ENCODE measurements at regions of chr14 and their contacts with region 1.

Region 1: DNA sequence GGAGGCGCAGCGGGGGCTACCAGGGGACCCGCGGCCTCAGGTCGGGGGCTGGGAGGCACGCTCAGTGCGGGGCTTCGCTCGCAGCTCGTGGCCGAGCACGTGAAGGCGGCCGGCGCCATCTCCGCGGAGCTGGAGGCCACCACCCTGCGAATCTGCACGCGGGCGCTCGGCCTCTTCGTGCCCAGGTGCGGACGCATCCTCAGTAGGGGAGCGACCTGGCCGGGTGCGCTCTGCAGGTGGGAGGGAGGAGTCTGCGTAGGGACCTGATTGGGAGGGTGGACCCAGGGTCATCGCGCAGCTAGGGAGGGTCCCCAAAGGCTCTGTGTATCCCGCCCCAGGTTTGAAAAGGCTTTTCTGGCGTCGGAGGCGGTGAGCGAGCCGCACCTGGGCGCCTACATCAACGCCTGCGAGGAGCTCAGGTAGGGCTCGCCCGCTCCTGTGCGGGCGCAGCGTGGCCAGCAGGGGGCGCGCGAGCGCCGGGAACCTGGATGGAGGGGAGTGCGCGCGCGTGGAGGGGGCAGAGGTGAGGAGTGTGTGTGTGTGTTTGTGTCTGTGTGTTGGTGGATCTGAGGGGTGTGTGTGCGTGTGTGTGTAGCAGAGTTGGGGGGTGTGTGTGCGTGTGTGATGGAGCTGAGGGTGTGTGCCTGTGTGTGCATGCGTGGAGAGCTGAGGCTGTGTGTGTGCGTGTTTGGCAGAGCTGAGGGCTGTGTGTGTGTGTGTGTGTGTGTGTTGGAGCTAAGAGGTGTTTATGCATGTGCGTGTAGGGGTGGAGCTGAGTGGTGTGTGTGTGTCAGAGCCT is 10.3 kb downstream of the EXOC3L4 start:
- DNase-seq: no peak
- H3K4me3 ChIP-seq: peak overlapping the region in 1 of 2 donors; percentile 11
- H3K27ac ChIP-seq: no peak overlapping the region
- H3K4me1 ChIP-seq: peaks cover 3 to 13% of the 10 kb centered on the region in 2 donors
- H3K27me3 ChIP-seq: peaks cover 28% of the 10 kb centered on the region
- CTCF ChIP-seq: peak; percentile 89 to 99 (median 99)

Region 2: GRCh38 chr14:102694530-102695166 is 410.2 kb before region 1 on chr14:
- intact Hi-C with region 1: loop called (anchors 10 kb)
- DNase-seq: peak in 1 of 2 donors; percentile 74
- H3K4me3 ChIP-seq: no peak overlapping the region
- H3K27ac ChIP-seq: no peak overlapping the region
- H3K4me1 ChIP-seq: no peaks in the 10 kb centered on the region
- H3K27me3 ChIP-seq: no peaks in the 10 kb centered on the region
- CTCF ChIP-seq: peak; percentile 57 to 71 (median 60)

Region 3: GRCh38 chr14:103185051-103185992 is 80.5 kb after region 1 on chr14:
- intact Hi-C with region 1: loop called (anchors 2 kb)
- DNase-seq: no peak
- H3K4me3 ChIP-seq: no peak overlapping the region
- H3K27ac ChIP-seq: no peak overlapping the region
- H3K4me1 ChIP-seq: peaks cover 0 to 3% of the 10 kb centered on the region in 2 donors
- H3K27me3 ChIP-seq: peaks cover 5% of the 10 kb centered on the region
- CTCF ChIP-seq: peak; percentile 40 to 52 (median 42)

Region 4: DNA sequence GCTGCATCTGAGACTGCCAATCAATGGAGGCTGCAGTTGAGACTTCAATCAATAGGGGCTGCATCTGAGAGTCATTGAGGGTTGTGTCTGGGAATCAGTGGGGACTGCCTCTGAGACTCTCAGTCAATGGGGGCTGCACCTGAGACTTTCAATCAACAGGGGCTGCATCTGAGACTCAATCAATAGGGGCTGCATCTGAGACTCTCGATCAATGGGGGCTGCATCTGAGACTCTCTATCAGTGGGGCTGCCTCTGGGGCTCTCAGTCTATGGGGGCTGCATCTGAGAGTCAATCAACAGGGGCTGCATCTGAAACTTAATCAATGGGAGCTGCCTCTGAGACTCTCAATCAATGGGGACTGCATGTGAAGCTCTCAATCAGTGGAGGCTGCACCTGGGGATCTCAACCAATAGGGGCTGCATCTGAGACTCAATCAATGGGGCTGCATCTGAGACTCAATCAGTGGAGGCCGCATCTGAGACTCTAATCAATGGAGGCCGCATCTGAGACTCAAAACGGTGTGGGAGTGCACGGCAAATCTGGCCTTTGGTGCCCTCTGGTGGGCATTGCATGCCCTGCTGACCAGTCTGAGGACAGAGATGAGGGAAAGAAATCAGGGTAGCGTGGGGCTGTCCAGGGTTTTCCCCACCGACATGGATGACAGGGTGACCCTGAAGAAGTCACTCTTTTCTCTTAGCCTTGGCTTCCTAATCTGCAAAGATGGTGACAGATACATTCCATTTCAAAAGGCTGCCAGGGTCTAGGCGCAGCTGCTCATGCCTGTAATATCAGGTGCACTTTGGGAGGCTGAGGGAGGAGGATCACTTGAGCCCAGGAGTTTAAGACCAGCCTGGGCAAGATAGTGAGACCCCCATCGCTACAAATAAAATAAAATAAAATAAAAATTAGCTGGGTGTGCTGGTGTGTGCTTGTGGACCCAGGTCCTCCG is 187.8 kb after region 1 on chr14:
- intact Hi-C with region 1: loop called (anchors 1 kb)
- DNase-seq: peak in 1 of 2 donors; percentile 85
- H3K4me3 ChIP-seq: no peak overlapping the region
- H3K27ac ChIP-seq: no peak overlapping the region
- H3K4me1 ChIP-seq: no peaks in the 10 kb centered on the region
- H3K27me3 ChIP-seq: no peaks in the 10 kb centered on the region
- CTCF ChIP-seq: peak; percentile 86 to 91 (median 88)

Measured in ascending aorta (tissue), 2 donors.